ENCODE measurements at regions of chr17 and their contacts with region 1.

Region 1: GRCh38 chr17:39621523-39622379 is 5.0 kb upstream of the PPP1R1B start:
- DNase-seq: peak; percentile 92
- ATAC-seq: peak; percentile 76
- H3K4me3 ChIP-seq: peak overlapping the region in 4 of 5 experiments; percentile 14 to 38 (median 29)
- H3K4me3 Mint-ChIP-seq: peak overlapping the region; percentile 84
- H3K27ac ChIP-seq: no peak overlapping the region
- H3K27ac Mint-ChIP-seq: peak overlapping the region; percentile 75
- H3K4me1 ChIP-seq: peaks cover 31 to 51% of the 10 kb centered on the region in 2 donors
- H3K4me1 Mint-ChIP-seq: peaks cover 32% of the 10 kb centered on the region
- H3K27me3 ChIP-seq: peaks cover 0 to 29% (median 9%) of the 10 kb centered on the region in 4 experiments
- H3K27me3 Mint-ChIP-seq: peaks cover 7% of the 10 kb centered on the region
- CTCF ChIP-seq: peak; percentile 100

Region 2: DNA sequence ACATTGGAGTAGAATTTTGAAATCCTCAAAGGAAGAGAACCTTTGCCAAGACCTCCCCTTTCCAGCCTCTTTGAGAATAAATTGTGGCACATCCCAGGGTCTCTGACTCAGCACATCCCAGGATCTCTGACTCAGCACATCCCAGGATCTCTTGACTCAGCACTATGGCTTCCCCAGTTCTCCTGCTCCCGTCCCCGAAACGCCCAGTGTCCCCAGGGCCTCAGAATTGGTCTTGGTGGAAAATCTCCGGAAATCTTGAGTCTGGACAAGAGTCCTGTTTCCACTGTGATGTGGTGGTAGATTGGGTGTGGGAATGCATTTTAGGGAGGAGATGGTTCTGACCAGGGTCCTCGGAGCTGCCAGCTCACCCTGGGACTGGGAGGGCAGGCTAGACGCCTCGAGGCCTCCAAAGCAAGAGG is 489.6 kb before region 1 on chr17:
- CTCF ChIA-PET with region 1: no interaction called
- POLR2A ChIA-PET with region 1: no interaction called
- intact Hi-C with region 1: no loop called
- DNase-seq: no peak
- ATAC-seq: no peak
- H3K4me3 ChIP-seq: no peak overlapping the region
- H3K4me3 Mint-ChIP-seq: no peak overlapping the region
- H3K27ac ChIP-seq: no peak overlapping the region
- H3K27ac Mint-ChIP-seq: no peak overlapping the region
- H3K4me1 ChIP-seq: no peaks in the 10 kb centered on the region
- H3K4me1 Mint-ChIP-seq: no peaks in the 10 kb centered on the region
- H3K27me3 ChIP-seq: no peaks in the 10 kb centered on the region
- H3K27me3 Mint-ChIP-seq: no peaks in the 10 kb centered on the region
- CTCF ChIP-seq: no peak

Region 3: DNA sequence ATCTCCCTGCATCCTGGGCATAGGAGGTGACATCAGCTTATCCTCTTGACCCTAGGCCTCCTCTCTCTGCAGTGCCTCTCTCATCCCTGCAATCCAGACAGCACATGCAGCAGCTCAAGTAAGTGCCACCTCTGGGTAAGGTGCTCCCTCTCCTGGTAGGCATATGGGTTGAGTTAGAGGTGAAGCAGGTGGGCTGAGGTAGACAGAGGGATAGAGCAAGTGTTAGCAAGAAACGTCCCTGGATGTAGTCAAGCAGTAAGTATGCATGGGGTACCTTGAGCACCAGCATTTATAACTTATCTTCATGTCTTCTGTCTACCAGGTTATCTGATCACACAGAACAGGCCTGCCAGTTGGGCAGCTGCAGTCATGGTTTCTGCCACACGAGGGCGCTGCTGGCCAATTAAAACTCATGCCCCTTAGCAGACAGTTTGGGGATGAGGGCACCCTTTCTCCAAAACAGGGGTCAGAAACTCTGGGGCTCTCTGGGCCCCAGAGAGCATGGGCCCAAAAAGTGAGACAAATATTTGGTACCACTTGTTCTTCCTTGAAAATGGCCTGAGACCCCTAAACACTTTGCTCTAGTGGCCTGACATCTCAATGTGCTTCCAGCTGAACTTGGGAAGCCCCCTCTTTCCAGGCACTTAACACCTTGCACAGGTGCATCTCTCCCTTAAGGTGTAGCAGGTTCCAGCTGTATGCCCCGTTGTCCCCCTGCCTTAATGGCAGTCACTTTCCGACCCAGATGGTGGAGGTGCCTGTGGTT is 73.9 kb before region 1 on chr17:
- CTCF ChIA-PET with region 1: interaction called, 262 read pairs
- POLR2A ChIA-PET with region 1: interaction called, 3 read pairs
- intact Hi-C with region 1: loop called (anchors 1 kb)
- DNase-seq: peak; percentile 83
- ATAC-seq: peak; percentile 66
- H3K4me3 ChIP-seq: no peak overlapping the region
- H3K4me3 Mint-ChIP-seq: no peak overlapping the region
- H3K27ac ChIP-seq: no peak overlapping the region
- H3K27ac Mint-ChIP-seq: no peak overlapping the region
- H3K4me1 ChIP-seq: peaks cover 28 to 39% of the 10 kb centered on the region in 2 donors
- H3K4me1 Mint-ChIP-seq: peaks cover 38% of the 10 kb centered on the region
- H3K27me3 ChIP-seq: no peaks in the 10 kb centered on the region
- H3K27me3 Mint-ChIP-seq: no peaks in the 10 kb centered on the region
- CTCF ChIP-seq: peak; percentile 96

Region 4: DNA sequence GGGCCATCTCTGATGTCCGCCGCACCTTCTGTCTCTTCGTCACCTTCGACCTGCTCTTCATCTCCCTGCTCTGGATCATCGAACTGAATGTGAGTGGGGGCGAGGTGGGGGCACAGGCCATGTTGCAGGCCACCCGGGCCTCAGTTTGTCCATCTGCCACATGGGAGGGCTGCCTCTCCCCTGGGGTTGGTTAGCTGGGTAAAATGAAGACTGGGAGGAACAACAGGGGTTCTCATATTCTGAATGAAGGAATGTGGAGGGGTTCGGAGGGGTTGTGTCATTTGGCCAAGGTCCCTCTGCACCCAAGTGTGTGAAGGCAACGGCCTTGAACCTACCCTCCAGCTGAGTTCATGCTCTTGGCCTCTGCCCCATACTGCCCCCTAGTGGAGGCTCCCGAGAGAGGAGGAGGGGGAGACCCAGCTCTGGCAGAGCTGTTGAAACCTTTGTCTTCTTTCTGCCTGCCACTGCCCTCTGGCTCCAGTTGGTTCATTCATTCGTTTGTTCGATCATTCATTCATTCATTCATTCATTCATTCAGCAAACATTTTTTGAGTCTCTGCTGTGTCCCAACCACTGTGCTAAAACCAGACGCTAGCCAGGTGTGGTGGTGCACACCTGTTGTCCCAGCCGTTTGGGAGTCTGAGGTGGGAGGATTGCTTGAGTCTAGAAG is 32.0 kb after region 1 on chr17:
- CTCF ChIA-PET with region 1: interaction called, 52 read pairs
- POLR2A ChIA-PET with region 1: no interaction called
- intact Hi-C with region 1: no loop called
- DNase-seq: peak; percentile 71
- ATAC-seq: peak; percentile 71
- H3K4me3 ChIP-seq: no peak overlapping the region
- H3K4me3 Mint-ChIP-seq: no peak overlapping the region
- H3K27ac ChIP-seq: no peak overlapping the region
- H3K27ac Mint-ChIP-seq: no peak overlapping the region
- H3K4me1 ChIP-seq: peaks cover 8 to 16% of the 10 kb centered on the region in 2 donors
- H3K4me1 Mint-ChIP-seq: peaks cover 36% of the 10 kb centered on the region
- H3K27me3 ChIP-seq: no peaks in the 10 kb centered on the region
- H3K27me3 Mint-ChIP-seq: no peaks in the 10 kb centered on the region
- CTCF ChIP-seq: peak; percentile 80

Region 5: DNA sequence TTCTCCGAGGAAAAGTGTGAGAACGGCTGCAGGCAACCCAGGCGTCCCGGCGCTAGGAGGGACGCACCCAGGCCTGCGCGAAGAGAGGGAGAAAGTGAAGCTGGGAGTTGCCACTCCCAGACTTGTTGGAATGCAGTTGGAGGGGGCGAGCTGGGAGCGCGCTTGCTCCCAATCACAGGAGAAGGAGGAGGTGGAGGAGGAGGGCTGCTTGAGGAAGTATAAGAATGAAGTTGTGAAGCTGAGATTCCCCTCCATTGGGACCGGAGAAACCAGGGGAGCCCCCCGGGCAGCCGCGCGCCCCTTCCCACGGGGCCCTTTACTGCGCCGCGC is 78.0 kb after region 1 on chr17 and contains the start of gene ERBB2:
- CTCF ChIA-PET with region 1: no interaction called
- POLR2A ChIA-PET with region 1: no interaction called
- intact Hi-C with region 1: no loop called
- DNase-seq: no peak
- ATAC-seq: no peak
- H3K4me3 ChIP-seq: peak within 1 kb of the TSS in 1 of 5 experiments; percentile 9
- H3K4me3 Mint-ChIP-seq: peak within 1 kb of the TSS; percentile 52
- H3K27ac ChIP-seq: no peak within 1 kb of the TSS
- H3K27ac Mint-ChIP-seq: no peak within 1 kb of the TSS
- H3K4me1 ChIP-seq: peaks cover 6 to 17% of the 10 kb centered on the region in 2 donors
- H3K4me1 Mint-ChIP-seq: peaks cover 11% of the 10 kb centered on the region
- H3K27me3 ChIP-seq: peaks cover 0 to 33% (median 17%) of the 10 kb centered on the region in 4 experiments
- H3K27me3 Mint-ChIP-seq: peaks cover 33% of the 10 kb centered on the region
- CTCF ChIP-seq: no peak
- total RNA-seq, gene ERBB2: 8.4 TPM in 2 replicates

Region 6: GRCh38 chr17:39730095-39730921 is 108.6 kb after region 1 on chr17 and contains the start of gene MIEN1:
- CTCF ChIA-PET with region 1: interaction called, 51 read pairs
- POLR2A ChIA-PET with region 1: interaction called, 7 read pairs
- intact Hi-C with region 1: loop called (anchors 5 kb)
- DNase-seq: peak; percentile 95
- ATAC-seq: peak; percentile 94
- H3K4me3 ChIP-seq: peak within 1 kb of the TSS; percentile 63 to 100 (median 78)
- H3K4me3 Mint-ChIP-seq: peak within 1 kb of the TSS; percentile 93
- H3K27ac ChIP-seq: peak within 1 kb of the TSS; percentile 82 to 96
- H3K27ac Mint-ChIP-seq: peak within 1 kb of the TSS; percentile 94
- H3K4me1 ChIP-seq: peaks cover 11 to 17% of the 10 kb centered on the region in 2 donors
- H3K4me1 Mint-ChIP-seq: peaks cover 28% of the 10 kb centered on the region
- H3K27me3 ChIP-seq: no peaks in the 10 kb centered on the region
- H3K27me3 Mint-ChIP-seq: no peaks in the 10 kb centered on the region
- CTCF ChIP-seq: peak; percentile 96
- total RNA-seq, gene MIEN1: 37.9 and 41.1 TPM in 2 replicates

Region 7: GRCh38 chr17:39863918-39864746 is 242.4 kb after region 1 on chr17 and contains the start of gene IKZF3:
- CTCF ChIA-PET with region 1: interaction called, 21 read pairs
- POLR2A ChIA-PET with region 1: no interaction called
- intact Hi-C with region 1: loop called (anchors 2 kb)
- DNase-seq: peak; percentile 90
- ATAC-seq: peak; percentile 62
- H3K4me3 ChIP-seq: peak within 1 kb of the TSS; percentile 80 to 99 (median 91)
- H3K4me3 Mint-ChIP-seq: peak within 1 kb of the TSS; percentile 99
- H3K27ac ChIP-seq: peak within 1 kb of the TSS; percentile 94 to 96
- H3K27ac Mint-ChIP-seq: peak within 1 kb of the TSS; percentile 87
- H3K4me1 ChIP-seq: peaks cover 43 to 55% of the 10 kb centered on the region in 2 donors
- H3K4me1 Mint-ChIP-seq: peaks cover 62% of the 10 kb centered on the region
- H3K27me3 ChIP-seq: no peaks in the 10 kb centered on the region
- H3K27me3 Mint-ChIP-seq: no peaks in the 10 kb centered on the region
- CTCF ChIP-seq: peak; percentile 45
- total RNA-seq, gene IKZF3: 178 and 187 TPM in 2 replicates

Region 8: DNA sequence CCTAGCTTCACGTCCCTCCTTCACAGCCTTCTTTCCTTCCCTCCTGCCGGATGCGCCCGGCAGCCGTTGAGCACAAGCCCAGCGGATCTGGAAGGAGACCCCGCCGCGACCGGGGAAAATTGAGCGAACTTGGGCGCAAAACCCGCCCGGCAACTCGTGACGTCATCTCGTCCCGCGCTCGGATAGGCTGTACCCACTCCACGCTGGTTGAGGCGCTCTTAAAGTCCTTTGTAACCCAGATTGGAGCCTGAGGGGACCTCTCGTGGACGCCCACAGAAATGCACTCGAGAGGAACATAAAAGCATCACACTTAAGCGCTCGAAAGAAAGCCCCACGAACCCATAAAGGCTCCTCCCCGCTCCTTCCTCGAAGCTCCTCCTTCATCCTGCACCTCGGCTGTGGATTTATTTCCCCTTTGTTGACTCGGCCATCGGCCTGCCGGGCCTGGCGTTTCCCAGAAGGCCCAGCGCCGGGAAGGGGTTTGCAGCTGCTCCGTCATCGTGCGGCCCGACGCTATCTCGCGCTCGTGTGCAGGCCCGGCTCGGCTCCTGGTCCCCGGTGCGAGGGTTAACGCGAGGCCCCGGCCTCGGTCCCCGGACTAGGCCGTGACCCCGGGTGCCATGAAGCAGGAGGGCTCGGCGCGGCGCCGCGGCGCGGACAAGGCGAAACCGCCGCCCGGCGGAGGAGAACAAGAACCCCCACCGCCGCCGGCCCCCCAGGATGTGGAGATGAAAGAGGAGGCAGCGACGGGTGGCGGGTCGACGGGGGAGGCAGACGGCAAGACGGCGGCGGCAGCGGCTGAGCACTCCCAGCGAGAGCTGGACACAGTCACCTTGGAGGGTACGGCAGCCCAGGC is 358.8 kb after region 1 on chr17 and contains the start of gene PSMD3:
- CTCF ChIA-PET with region 1: interaction called, 40 read pairs
- POLR2A ChIA-PET with region 1: interaction called, 4 read pairs
- intact Hi-C with region 1: loop called (anchors 1 kb)
- DNase-seq: peak; percentile 100
- ATAC-seq: peak; percentile 92
- H3K4me3 ChIP-seq: peak within 1 kb of the TSS; percentile 76 to 93 (median 91)
- H3K4me3 Mint-ChIP-seq: peak within 1 kb of the TSS; percentile 96
- H3K27ac ChIP-seq: peak within 1 kb of the TSS; percentile 92 to 97
- H3K27ac Mint-ChIP-seq: peak within 1 kb of the TSS; percentile 95
- H3K4me1 ChIP-seq: peaks cover 25 to 26% of the 10 kb centered on the region in 2 donors
- H3K4me1 Mint-ChIP-seq: peaks cover 38% of the 10 kb centered on the region
- H3K27me3 ChIP-seq: no peaks in the 10 kb centered on the region
- H3K27me3 Mint-ChIP-seq: no peaks in the 10 kb centered on the region
- CTCF ChIP-seq: peak; percentile 76
- total RNA-seq, gene PSMD3: 69.4 and 76.6 TPM in 2 replicates

Measured in B cell (primary cell).